HCT116 (cell line): ENCODE measurements at regions of chr14 and their contacts with region 1.

Region 1: GRCh38 chr14:93619176-93619793 is 169.0 kb downstream of the PRIMA1 start:
- DNase-seq: peak; percentile 48
- ATAC-seq: peak; percentile 76
- H3K4me3 ChIP-seq: no peak overlapping the region
- H3K27ac ChIP-seq: no peak overlapping the region
- H3K4me1 ChIP-seq: no peaks in the 10 kb centered on the region
- H3K27me3 ChIP-seq: peaks cover 27% of the 10 kb centered on the region
- CTCF ChIP-seq: peak; percentile 59 to 70 (median 67); a peak in 5 of 6 replicates
- POLR2A ChIP-seq: no peak
- RAD21 ChIP-seq: peak; percentile 81

Region 2: GRCh38 chr14:93239869-93240677 is 379.2 kb before region 1 on chr14:
- CTCF ChIA-PET with region 1: no interaction called
- POLR2A ChIA-PET with region 1: no interaction called
- RAD21 ChIA-PET with region 1: no interaction called
- intact Hi-C with region 1: loop called (anchors 5 kb)
- DNase-seq: peak; percentile 57
- ATAC-seq: peak; percentile 96
- H3K4me3 ChIP-seq: peak overlapping the region in 1 of 2 experiments; percentile 48; a peak in 2 of 4 replicates
- H3K27ac ChIP-seq: peak overlapping the region; percentile 7; the same call in 1 of the 2 replicates
- H3K4me1 ChIP-seq: peaks cover 13 to 23% of the 10 kb centered on the region in 2 experiments
- H3K27me3 ChIP-seq: no peaks in the 10 kb centered on the region
- CTCF ChIP-seq: no peak
- POLR2A ChIP-seq: no peak
- RAD21 ChIP-seq: no peak